ENCODE measurements at regions of chr3 and their contacts with region 1.

Region 1: GRCh38 chr3:125437631-125438435 is 62.7 kb upstream of the ZNF148 start:
- DNase-seq: no peak
- H3K4me3 ChIP-seq: no peak overlapping the region
- CTCF ChIP-seq: peak; percentile 82

Region 2: GRCh38 chr3:124928333-124929202 is 509.3 kb before region 1 on chr3:
- CTCF ChIA-PET with region 1: interaction called, 13 read pairs
- POLR2A ChIA-PET with region 1: no interaction called
- DNase-seq: no peak
- H3K4me3 ChIP-seq: no peak overlapping the region
- CTCF ChIP-seq: peak; percentile 75

Region 3: DNA sequence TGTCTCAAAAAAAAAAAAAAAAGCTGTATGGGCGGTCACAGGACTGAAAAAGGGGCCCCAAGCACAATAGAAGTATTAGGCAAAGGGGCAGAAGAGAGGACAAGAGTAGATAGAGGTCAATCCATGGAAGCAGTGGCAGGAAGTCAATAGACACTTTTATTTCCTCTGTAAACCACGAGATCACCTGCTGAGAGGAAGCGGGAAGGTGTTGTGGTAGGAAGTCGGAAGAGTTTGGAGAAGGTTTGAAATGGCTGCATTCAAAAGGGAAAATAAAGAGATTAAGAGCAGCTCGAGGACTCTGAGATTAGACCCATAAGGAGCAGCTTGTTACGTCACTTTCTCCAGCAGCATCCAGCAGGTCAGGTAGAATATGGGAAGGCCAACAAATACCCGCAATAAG is 48.6 kb before region 1 on chr3:
- CTCF ChIA-PET with region 1: no interaction called
- POLR2A ChIA-PET with region 1: no interaction called
- DNase-seq: no peak
- H3K4me3 ChIP-seq: no peak overlapping the region
- CTCF ChIP-seq: no peak

Region 4: DNA sequence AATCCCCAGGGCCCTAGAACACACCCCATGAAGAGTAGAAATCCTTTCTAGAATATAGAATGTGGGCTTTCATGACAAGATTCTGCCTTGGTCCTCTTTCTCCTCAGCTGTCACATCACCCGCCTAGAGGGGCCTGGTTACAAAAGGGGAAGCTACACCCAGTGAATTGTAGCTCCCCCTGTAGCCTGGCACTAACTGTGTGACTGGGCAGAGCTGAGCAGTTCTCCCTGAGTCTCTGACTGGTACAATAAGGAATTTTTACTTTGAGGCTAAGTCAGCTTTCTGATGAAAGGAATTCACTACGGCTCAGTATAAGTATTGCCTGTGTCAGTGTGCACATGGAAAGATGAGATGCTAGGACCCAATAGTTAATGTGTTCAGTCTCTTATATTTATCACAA is 34.0 kb before region 1 on chr3:
- CTCF ChIA-PET with region 1: interaction called, 13 read pairs
- POLR2A ChIA-PET with region 1: no interaction called
- DNase-seq: peak; percentile 37
- H3K4me3 ChIP-seq: no peak overlapping the region
- CTCF ChIP-seq: peak; percentile 57

Region 5: GRCh38 chr3:125418306-125418705 is 19.5 kb before region 1 on chr3:
- CTCF ChIA-PET with region 1: interaction called, 32 read pairs
- POLR2A ChIA-PET with region 1: no interaction called
- DNase-seq: no peak
- H3K4me3 ChIP-seq: no peak overlapping the region
- CTCF ChIP-seq: no peak

Region 6: GRCh38 chr3:126146525-126147146 is 708.8 kb after region 1 on chr3:
- CTCF ChIA-PET with region 1: no interaction called
- POLR2A ChIA-PET with region 1: no interaction called
- DNase-seq: no peak
- H3K4me3 ChIP-seq: no peak overlapping the region
- CTCF ChIP-seq: no peak